ENCODE measurements at regions of chr16 and their contacts with region 1.

Region 1: GRCh38 chr16:2777231-2777902 is at the start of gene ELOB:
- DNase-seq: peak; percentile 81 to 95 (median 90)
- ATAC-seq: peak; percentile 95
- H3K4me3 ChIP-seq: peak within 1 kb of the TSS; percentile 93
- H3K4me3 Mint-ChIP-seq: peak within 1 kb of the TSS; percentile 93 to 97 (median 96)
- H3K27ac ChIP-seq: peak within 1 kb of the TSS; percentile 99
- H3K27ac Mint-ChIP-seq: peak within 1 kb of the TSS; percentile 96 to 99 (median 98)
- H3K4me1 ChIP-seq: peaks cover 19 to 24% of the 10 kb centered on the region in 2 donors
- H3K4me1 Mint-ChIP-seq: peaks cover 20 to 55% (median 38%) of the 10 kb centered on the region in 7 donors
- H3K27me3 ChIP-seq: no peaks in the 10 kb centered on the region
- H3K27me3 Mint-ChIP-seq: no peaks in the 10 kb centered on the region
- total RNA-seq, gene ELOB: 65.3 to 242 (median 99.3) TPM

Region 2: GRCh38 chr16:2682209-2683021 is 95.0 kb before region 1 on chr16 and contains the start of gene KCTD5:
- CTCF ChIA-PET with region 1: no interaction called
- POLR2A ChIA-PET with region 1: interaction called, 3 read pairs
- intact Hi-C with region 1: loop called in 1 of 2 experiments (anchors 1 kb)
- DNase-seq: peak; percentile 89 to 98 (median 94)
- ATAC-seq: peak; percentile 97
- H3K4me3 ChIP-seq: peak within 1 kb of the TSS; percentile 81
- H3K4me3 Mint-ChIP-seq: peak within 1 kb of the TSS; percentile 89 to 99 (median 94)
- H3K27ac ChIP-seq: peak within 1 kb of the TSS; percentile 92
- H3K27ac Mint-ChIP-seq: peak within 1 kb of the TSS; percentile 82 to 99 (median 94)
- H3K4me1 ChIP-seq: peaks cover 8 to 18% of the 10 kb centered on the region in 2 donors
- H3K4me1 Mint-ChIP-seq: peaks cover 12 to 29% (median 25%) of the 10 kb centered on the region in 7 donors
- H3K27me3 ChIP-seq: no peaks in the 10 kb centered on the region
- H3K27me3 Mint-ChIP-seq: no peaks in the 10 kb centered on the region
- total RNA-seq, gene KCTD5: 21.4 to 37.5 (median 24.6) TPM

Region 3: GRCh38 chr16:2715519-2715918 is 61.8 kb before region 1 on chr16:
- CTCF ChIA-PET with region 1: no interaction called
- POLR2A ChIA-PET with region 1: no interaction called
- intact Hi-C with region 1: loop called in 1 of 2 experiments (anchors 1 kb)
- DNase-seq: peak; percentile 63 to 92 (median 79)
- ATAC-seq: peak; percentile 97
- H3K4me3 ChIP-seq: no peak overlapping the region
- H3K4me3 Mint-ChIP-seq: peak overlapping the region in 4 of 10 donors; percentile 9 to 55 (median 32)
- H3K27ac ChIP-seq: no peak overlapping the region
- H3K27ac Mint-ChIP-seq: no peak overlapping the region
- H3K4me1 ChIP-seq: peaks cover 0 to 3% of the 10 kb centered on the region in 2 donors
- H3K4me1 Mint-ChIP-seq: peaks cover 0 to 15% (median 5%) of the 10 kb centered on the region in 7 donors
- H3K27me3 ChIP-seq: no peaks in the 10 kb centered on the region
- H3K27me3 Mint-ChIP-seq: peaks cover 0 to 6% (median 0%) of the 10 kb centered on the region in 5 donors

Region 4: GRCh38 chr16:2752035-2752849 is 25.1 kb before region 1 on chr16 and contains the start of gene SRRM2:
- CTCF ChIA-PET with region 1: interaction called, 3 read pairs
- POLR2A ChIA-PET with region 1: interaction called, 66 read pairs
- intact Hi-C with region 1: loop called (anchors 1 kb)
- DNase-seq: peak; percentile 92 to 98 (median 96)
- ATAC-seq: peak; percentile 92
- H3K4me3 ChIP-seq: peak within 1 kb of the TSS; percentile 68
- H3K4me3 Mint-ChIP-seq: peak within 1 kb of the TSS; percentile 89 to 98 (median 94)
- H3K27ac ChIP-seq: peak within 1 kb of the TSS; percentile 100
- H3K27ac Mint-ChIP-seq: peak within 1 kb of the TSS; percentile 96 to 100 (median 99)
- H3K4me1 ChIP-seq: peaks cover 35 to 40% of the 10 kb centered on the region in 2 donors
- H3K4me1 Mint-ChIP-seq: peaks cover 37 to 57% (median 50%) of the 10 kb centered on the region in 7 donors
- H3K27me3 ChIP-seq: no peaks in the 10 kb centered on the region
- H3K27me3 Mint-ChIP-seq: no peaks in the 10 kb centered on the region
- total RNA-seq, gene SRRM2: 590 to 1,259 (median 1,020) TPM

Region 5: DNA sequence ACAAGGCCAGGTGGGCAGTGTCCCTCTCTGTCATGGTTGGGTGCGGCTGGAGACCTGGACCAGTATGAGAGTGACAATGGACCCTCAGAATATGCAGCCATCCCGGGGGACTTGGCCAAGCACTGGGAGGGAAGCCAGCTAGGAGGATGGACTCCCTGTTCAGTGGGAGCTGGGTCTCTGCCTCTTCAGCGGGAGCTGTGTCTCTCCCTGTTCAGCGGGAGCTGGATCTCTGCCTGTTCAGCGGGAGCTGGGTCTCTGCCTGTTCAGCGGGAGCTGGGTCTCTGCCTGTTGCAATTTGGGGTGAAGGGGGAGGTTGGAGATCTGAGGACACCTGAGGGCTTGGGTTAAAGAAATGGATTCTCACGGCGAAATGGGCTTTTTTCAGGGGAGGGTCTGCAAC is 13.8 kb after region 1 on chr16:
- CTCF ChIA-PET with region 1: no interaction called
- POLR2A ChIA-PET with region 1: interaction called, 10 read pairs
- intact Hi-C with region 1: no loop called
- DNase-seq: peak in 1 of 9 donors; percentile 1
- ATAC-seq: no peak
- H3K4me3 ChIP-seq: no peak overlapping the region
- H3K4me3 Mint-ChIP-seq: no peak overlapping the region
- H3K27ac ChIP-seq: no peak overlapping the region
- H3K27ac Mint-ChIP-seq: no peak overlapping the region
- H3K4me1 ChIP-seq: peaks cover 0 to under 1% of the 10 kb centered on the region in 2 donors
- H3K4me1 Mint-ChIP-seq: peaks cover 0 to 7% (median under 1%) of the 10 kb centered on the region in 7 donors
- H3K27me3 ChIP-seq: no peaks in the 10 kb centered on the region
- H3K27me3 Mint-ChIP-seq: peaks cover 5 to 40% (median 28%) of the 10 kb centered on the region in 5 donors

Region 6: DNA sequence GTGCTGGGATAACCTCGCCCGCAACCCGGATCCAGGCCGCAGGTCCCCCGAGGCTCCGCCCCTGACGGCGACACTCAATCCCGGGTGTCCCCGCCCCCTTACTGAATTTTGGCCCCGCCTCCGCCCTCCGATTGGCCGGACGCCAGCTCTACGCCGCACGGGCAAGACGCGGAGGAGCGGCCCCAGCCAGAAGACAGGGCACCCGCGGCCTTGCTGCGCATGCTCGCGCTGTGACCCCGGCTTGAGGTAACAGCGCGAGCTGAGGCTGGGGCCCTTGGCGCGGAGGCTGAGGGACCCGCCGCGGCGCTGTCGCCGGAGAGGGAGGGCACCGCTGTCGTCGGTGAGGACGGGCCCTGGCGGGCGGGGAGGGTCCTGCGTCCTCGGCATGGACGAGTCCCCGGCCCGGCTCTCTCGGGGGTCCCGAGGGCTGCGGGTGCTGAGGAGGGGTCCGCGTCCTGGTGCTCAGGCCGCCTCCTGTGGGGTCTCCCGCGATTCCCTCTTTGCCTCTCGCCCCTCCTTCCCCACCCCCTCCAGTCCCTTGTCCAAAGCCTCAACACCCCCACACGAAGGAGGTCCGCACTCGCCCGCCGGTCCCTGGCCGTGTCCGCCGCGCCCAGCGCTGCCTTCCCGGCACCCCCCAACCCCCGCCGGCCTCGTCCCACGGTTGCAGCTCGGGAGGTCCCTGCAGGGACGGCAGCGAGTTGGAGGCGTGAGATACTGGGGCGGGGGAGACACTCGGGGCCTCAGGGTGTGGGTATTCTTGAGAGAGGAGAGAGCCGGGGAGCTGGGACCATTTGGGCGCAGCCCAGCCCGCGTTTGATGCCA is 105.9 kb after region 1 on chr16 and contains the start of gene FLYWCH2:
- CTCF ChIA-PET with region 1: no interaction called
- POLR2A ChIA-PET with region 1: interaction called, 7 read pairs
- intact Hi-C with region 1: loop called in 1 of 2 experiments (anchors 5 kb)
- DNase-seq: peak; percentile 98 to 100 (median 100)
- ATAC-seq: peak; percentile 89
- H3K4me3 ChIP-seq: peak within 1 kb of the TSS; percentile 69
- H3K4me3 Mint-ChIP-seq: peak within 1 kb of the TSS; percentile 90 to 97 (median 94)
- H3K27ac ChIP-seq: peak within 1 kb of the TSS; percentile 84
- H3K27ac Mint-ChIP-seq: peak within 1 kb of the TSS; percentile 93 to 99 (median 97)
- H3K4me1 ChIP-seq: peaks cover 6% of the 10 kb centered on the region in 2 donors
- H3K4me1 Mint-ChIP-seq: peaks cover 0 to 18% (median 13%) of the 10 kb centered on the region in 7 donors
- H3K27me3 ChIP-seq: no peaks in the 10 kb centered on the region
- H3K27me3 Mint-ChIP-seq: no peaks in the 10 kb centered on the region
- total RNA-seq, gene FLYWCH2: 13.6 to 30.4 (median 24.0) TPM

Region 7: DNA sequence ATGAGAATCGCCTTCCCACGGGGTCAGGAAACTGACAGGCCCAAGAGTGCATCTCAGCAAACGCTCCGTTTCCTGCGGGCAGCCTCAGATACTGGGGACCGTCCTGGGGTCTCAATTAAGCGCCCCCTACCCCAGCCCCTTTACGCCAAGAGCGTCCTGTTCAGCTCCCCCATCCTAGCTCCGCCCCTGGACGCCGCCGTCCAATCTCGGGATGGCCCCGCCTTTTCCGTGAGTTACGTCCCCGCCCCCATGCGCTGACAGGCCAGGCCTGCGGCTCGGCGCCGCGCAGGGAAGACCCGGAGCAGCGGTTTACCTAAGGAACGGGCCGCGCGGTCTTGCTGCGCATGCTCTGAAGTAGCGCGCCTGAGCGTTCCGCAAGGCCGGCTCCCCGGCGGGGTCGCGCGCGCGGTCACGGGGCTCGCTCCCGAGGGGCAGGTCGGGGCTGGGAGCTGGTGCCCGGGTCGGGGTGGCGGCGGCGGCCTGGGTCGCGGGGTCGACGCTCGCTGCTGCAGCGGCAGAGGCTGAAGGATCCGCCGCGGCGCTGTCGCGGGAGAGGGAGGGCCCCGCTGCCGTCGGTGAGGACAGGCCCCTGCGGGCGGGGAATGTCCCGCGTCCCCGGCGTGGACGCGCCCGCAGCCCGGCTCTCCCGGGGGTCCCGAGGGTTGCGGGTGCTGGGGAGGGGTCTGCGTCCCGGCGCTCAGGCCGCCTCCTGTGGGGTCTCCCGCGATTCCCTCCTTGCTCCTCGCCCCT is 134.4 kb after region 1 on chr16 and contains the start of gene FLYWCH1:
- CTCF ChIA-PET with region 1: interaction called, 3 read pairs
- POLR2A ChIA-PET with region 1: no interaction called
- intact Hi-C with region 1: loop called in 1 of 2 experiments (anchors 2 kb)
- DNase-seq: peak; percentile 94 to 99 (median 97)
- ATAC-seq: peak; percentile 99
- H3K4me3 ChIP-seq: peak within 1 kb of the TSS; percentile 85
- H3K4me3 Mint-ChIP-seq: peak within 1 kb of the TSS; percentile 80 to 97 (median 92)
- H3K27ac ChIP-seq: peak within 1 kb of the TSS; percentile 78
- H3K27ac Mint-ChIP-seq: peak within 1 kb of the TSS; percentile 80 to 96 (median 87)
- H3K4me1 ChIP-seq: peaks cover 7 to 8% of the 10 kb centered on the region in 2 donors
- H3K4me1 Mint-ChIP-seq: peaks cover 11 to 39% (median 30%) of the 10 kb centered on the region in 7 donors
- H3K27me3 ChIP-seq: no peaks in the 10 kb centered on the region
- H3K27me3 Mint-ChIP-seq: peaks cover 0 to 10% (median 0%) of the 10 kb centered on the region in 5 donors
- total RNA-seq, gene FLYWCH1: 48.6 to 149 (median 87.0) TPM

Region 8: DNA sequence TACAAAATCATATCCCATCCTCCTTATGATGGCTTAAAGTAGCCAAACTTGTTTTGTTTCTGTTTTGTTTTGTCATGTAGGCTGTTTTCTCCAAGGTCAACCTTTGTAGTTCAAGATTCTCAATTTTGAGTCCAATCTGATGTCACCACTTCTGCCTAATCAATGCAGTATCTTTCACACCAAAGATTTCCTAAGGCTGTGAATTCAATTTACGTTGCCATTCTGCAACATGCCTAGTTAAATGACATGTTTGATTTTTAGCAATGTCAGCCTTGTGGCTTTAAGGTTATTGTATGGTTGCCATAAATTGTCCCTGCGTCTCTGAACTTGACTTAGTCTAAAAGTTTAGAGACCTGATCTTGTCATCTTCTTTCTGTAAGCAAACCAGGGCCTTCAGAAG is 377.8 kb after region 1 on chr16:
- CTCF ChIA-PET with region 1: no interaction called
- POLR2A ChIA-PET with region 1: no interaction called
- intact Hi-C with region 1: no loop called
- DNase-seq: peak in 1 of 9 donors; percentile 24
- ATAC-seq: no peak
- H3K4me3 ChIP-seq: no peak overlapping the region
- H3K4me3 Mint-ChIP-seq: peak overlapping the region in 2 of 10 donors; percentile 6 to 24
- H3K27ac ChIP-seq: no peak overlapping the region
- H3K27ac Mint-ChIP-seq: peak overlapping the region in 1 of 9 donors; percentile 40
- H3K4me1 ChIP-seq: peaks cover 5 to 9% of the 10 kb centered on the region in 2 donors
- H3K4me1 Mint-ChIP-seq: peaks cover 21 to 50% (median 43%) of the 10 kb centered on the region in 7 donors
- H3K27me3 ChIP-seq: no peaks in the 10 kb centered on the region
- H3K27me3 Mint-ChIP-seq: peaks cover 0 to 44% (median 0%) of the 10 kb centered on the region in 5 donors